HCT116 (cell line): ENCODE measurements at regions of chr12 and their contacts with region 1.

Region 1: GRCh38 chr12:109775172-109775881 is 57.9 kb downstream of the TRPV4 start:
- DNase-seq: no peak
- ATAC-seq: peak; percentile 67
- H3K4me3 ChIP-seq: no peak overlapping the region
- H3K27ac ChIP-seq: no peak overlapping the region
- H3K4me1 ChIP-seq: peaks cover 13 to 34% of the 10 kb centered on the region in 2 experiments
- H3K27me3 ChIP-seq: no peaks in the 10 kb centered on the region
- CTCF ChIP-seq: peak; percentile 91 to 96 (median 94)
- POLR2A ChIP-seq: no peak
- RAD21 ChIP-seq: peak; percentile 98

Region 2: GRCh38 chr12:109264095-109264942 is 511.0 kb before region 1 on chr12:
- CTCF ChIA-PET with region 1: no interaction called
- POLR2A ChIA-PET with region 1: no interaction called
- RAD21 ChIA-PET with region 1: interaction called, 3 to 4 read pairs
- intact Hi-C with region 1: loop called (anchors 2 kb)
- DNase-seq: peak; percentile 77
- ATAC-seq: peak; percentile 98
- H3K4me3 ChIP-seq: peak overlapping the region in 1 of 2 experiments; percentile 13; a peak in 1 of 4 replicates
- H3K27ac ChIP-seq: no peak overlapping the region
- H3K4me1 ChIP-seq: peaks cover 0 to 13% of the 10 kb centered on the region in 2 experiments; a peak in 2 of 4 replicates
- H3K27me3 ChIP-seq: no peaks in the 10 kb centered on the region
- CTCF ChIP-seq: peak; percentile 95 to 97 (median 95)
- POLR2A ChIP-seq: no peak
- RAD21 ChIP-seq: peak; percentile 88

Region 3: GRCh38 chr12:109518820-109519665 is 256.3 kb before region 1 on chr12:
- CTCF ChIA-PET with region 1: interaction called, 11 read pairs
- POLR2A ChIA-PET with region 1: no interaction called
- RAD21 ChIA-PET with region 1: no interaction called
- intact Hi-C with region 1: loop called (anchors 1 kb)
- DNase-seq: peak; percentile 26
- ATAC-seq: peak; percentile 91
- H3K4me3 ChIP-seq: no peak overlapping the region
- H3K27ac ChIP-seq: no peak overlapping the region
- H3K4me1 ChIP-seq: no peaks in the 10 kb centered on the region
- H3K27me3 ChIP-seq: no peaks in the 10 kb centered on the region
- CTCF ChIP-seq: peak; percentile 82 to 93 (median 92)
- POLR2A ChIP-seq: no peak
- RAD21 ChIP-seq: peak; percentile 85